Right ventricle myocardium inferior (tissue), 1 donor: ENCODE measurements at regions of chr9 and their contacts with region 1.

Region 1: DNA sequence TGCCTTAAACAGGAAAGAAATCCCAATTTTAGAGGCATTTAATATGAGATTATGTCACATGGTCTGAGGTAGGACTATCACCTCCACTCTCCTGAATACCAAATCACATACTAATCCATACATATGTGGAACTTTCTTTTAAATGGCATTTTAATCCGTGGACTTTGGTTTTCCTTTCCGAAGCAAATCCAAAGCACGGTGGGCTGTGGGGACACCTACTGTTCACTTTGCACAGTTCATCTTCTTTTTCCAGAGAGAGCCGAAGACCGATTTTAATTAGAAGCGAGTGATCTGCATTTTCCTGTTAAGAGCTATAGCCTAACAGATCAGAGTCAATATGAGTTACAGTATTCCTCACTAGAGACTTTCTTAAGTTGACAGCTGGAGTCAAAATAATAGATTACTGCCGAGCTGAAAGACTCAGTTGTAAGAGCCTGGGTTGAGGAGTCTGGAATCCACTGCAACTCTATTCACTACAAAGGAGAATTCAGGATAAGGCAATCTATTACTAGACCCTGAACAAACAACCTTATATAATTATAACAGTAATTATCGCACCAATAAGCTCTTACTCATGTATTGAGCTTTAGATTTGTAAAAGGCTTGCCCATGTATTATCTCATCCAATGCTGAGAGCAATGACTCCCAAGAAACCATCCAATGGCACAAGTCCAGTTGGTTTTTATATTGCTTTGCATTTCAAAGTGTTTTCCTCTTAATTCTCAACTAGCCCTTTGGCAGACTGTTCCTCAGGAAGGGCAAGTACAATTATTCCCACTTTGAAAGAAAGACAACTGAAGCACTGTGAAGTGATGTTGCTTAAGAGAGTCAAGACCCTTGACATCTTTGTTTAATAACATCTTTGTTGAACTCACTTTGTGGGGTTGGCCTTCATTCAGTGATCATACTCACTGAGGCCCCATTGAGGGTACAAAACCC is 144.7 kb downstream of the TRPM6 start:
- DNase-seq: no peak
- ATAC-seq: no peak

Region 2: DNA sequence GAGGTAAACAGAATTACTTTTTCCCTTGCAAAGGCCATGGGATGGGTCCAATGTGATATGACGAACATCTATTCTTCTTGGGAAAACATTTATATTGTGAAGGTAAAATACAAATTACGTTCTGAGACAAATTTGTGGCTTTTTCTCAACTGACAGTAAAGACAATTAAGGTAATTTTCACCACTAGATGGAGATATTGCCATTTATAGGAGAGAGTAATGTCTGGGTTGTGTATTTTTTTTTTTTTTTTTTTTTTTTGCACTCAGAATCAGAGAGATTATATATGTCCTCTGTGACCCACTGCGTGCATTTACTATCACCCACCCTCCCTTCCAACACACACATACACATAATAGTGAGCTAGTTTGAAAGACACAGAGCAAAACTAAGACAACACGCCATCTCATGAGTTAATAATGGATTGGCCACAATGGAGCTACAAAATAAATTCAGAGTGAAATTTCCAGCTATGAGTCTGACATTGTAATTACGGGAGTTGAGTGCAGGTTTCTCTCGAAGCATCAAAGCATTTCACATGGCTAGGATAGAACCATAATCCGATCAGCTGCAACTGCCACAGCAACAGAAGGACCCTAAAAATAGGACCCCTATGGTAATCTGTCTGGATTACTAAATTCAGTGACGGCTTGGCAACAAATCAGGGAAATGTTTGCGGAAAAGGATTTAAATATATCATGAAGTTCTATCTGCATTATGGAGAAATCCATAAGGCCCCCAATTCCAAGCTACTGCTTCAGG is 1542.2 kb before region 1 on chr9:
- intact Hi-C with region 1: loop called (anchors 10 kb)
- DNase-seq: no peak
- ATAC-seq: no peak

Region 3: DNA sequence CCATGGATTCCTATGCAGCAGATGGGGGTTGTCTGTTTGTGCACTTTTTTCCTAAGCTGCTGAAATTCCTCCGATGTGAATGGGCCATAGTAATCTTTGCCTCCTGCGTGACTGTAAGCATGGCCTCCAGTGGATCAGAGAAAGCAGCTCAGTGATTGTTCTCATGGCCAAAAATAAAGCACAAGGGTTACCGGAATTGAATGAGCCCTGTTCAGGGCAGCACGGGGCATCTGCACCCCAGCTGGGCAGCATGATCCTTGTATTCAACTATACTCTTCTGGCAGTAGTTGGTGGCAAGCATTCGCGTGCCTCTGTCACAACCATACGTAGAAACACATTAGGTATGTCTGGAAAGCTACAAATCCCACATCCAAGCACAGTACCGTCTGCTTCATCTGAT is 52.0 kb before region 1 on chr9:
- intact Hi-C with region 1: no loop called
- DNase-seq: no peak
- ATAC-seq: no peak